ENCODE measurements at regions of chr15 and their contacts with region 1.

Region 1: GRCh38 chr15:74127260-74127953 is 3.0 kb upstream of the ISLR2 start:
- DNase-seq: peak; percentile 90 to 96 (median 96)
- ATAC-seq: peak; percentile 96
- H3K4me3 ChIP-seq: peak overlapping the region; percentile 39
- H3K27ac ChIP-seq: no peak overlapping the region
- H3K4me1 ChIP-seq: peaks cover 1% of the 10 kb centered on the region
- H3K27me3 ChIP-seq: no peaks in the 10 kb centered on the region

Region 2: GRCh38 chr15:73972984-73973682 is 154.3 kb before region 1 on chr15:
- intact Hi-C with region 1: loop called in 2 of 4 experiments (anchors 5 to 10 kb)
- DNase-seq: peak; percentile 86 to 95 (median 92)
- ATAC-seq: peak; percentile 90 to 93
- H3K4me3 ChIP-seq: no peak overlapping the region
- H3K27ac ChIP-seq: no peak overlapping the region
- H3K4me1 ChIP-seq: no peaks in the 10 kb centered on the region
- H3K27me3 ChIP-seq: no peaks in the 10 kb centered on the region

Region 3: DNA sequence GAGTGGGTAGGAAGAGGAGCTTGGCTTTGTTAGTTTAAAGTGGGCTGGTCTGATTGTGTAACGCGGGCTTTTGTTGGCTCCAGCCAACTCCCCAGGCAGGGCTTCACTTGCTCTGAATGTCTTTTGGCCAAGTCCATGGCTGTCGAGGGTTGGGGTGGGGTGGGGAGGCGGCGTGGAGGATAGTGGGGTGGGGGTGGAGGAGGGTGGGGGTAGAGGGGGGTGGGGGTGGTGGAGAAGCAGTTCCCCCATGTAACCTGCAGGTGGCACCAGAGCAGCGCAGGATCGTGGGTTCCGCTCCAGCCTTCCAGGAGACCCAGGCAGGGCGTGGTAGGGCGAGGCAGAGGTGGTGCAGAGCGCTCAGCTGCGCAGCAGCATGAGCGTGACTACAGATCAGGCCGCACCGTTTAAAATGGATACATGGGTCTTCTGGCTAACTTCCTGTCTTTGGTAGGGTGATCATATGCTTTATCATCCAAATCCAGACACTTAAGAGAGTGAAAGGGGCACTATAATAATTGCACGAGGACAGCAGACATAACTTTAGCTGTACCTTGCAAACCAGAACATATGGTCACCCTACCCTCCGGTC is 73.4 kb before region 1 on chr15:
- intact Hi-C with region 1: loop called in 1 of 4 experiments (anchors 10 kb)
- DNase-seq: peak; percentile 80 to 91 (median 89)
- ATAC-seq: peak; percentile 82 to 85
- H3K4me3 ChIP-seq: no peak overlapping the region
- H3K27ac ChIP-seq: no peak overlapping the region
- H3K4me1 ChIP-seq: no peaks in the 10 kb centered on the region
- H3K27me3 ChIP-seq: no peaks in the 10 kb centered on the region

Region 4: GRCh38 chr15:74302821-74303359 is 175.5 kb after region 1 on chr15:
- intact Hi-C with region 1: loop called (anchors 2 to 5 kb)
- DNase-seq: peak in 2 of 3 donors; percentile 34 to 65
- ATAC-seq: peak; percentile 29 to 48
- H3K4me3 ChIP-seq: no peak overlapping the region
- H3K27ac ChIP-seq: no peak overlapping the region
- H3K4me1 ChIP-seq: no peaks in the 10 kb centered on the region
- H3K27me3 ChIP-seq: no peaks in the 10 kb centered on the region

Region 5: DNA sequence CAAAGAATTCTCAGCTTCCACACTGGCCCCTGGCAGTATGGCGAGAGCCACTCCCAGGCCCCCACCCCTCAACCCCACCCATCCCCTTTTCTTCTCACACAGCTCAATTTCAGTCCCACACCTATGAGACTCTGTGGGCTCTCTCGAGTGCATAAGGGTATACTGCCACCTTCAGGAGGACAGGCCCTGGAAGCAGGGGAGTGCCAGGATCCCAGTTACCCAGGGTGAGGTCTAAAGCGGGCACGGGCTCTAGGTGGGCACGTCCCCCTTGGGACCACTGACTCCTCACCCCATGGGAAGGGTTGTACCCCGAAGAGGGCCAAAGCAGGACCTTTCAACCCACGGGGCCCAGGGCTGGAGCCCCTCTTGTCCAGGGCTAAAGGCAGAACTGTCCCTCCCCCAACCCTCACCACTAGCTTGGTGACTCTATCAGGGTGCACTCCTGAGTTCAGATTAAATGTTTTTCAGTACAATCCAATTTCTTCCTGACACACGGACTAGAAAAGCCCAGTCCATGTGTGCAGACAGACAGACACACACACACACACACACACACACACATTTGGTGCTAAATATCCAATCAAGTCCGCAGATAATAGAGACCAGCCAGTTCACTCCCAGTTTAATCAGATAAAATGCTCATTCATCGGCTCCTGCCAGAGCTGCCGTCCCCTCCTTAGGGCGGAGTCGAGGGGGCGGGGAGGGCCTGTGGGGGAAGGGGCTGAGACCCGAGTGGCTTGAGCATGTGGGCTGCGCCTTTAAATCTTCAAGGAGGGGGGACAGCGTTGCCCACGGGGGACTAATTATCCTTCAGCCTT is 180.6 kb after region 1 on chr15:
- intact Hi-C with region 1: loop called (anchors 2 to 5 kb)
- DNase-seq: peak; percentile 51 to 79 (median 75)
- ATAC-seq: peak; percentile 84 to 89
- H3K4me3 ChIP-seq: no peak overlapping the region
- H3K27ac ChIP-seq: no peak overlapping the region
- H3K4me1 ChIP-seq: no peaks in the 10 kb centered on the region
- H3K27me3 ChIP-seq: no peaks in the 10 kb centered on the region

Region 6: GRCh38 chr15:74322181-74323076 is 195.0 kb after region 1 on chr15:
- intact Hi-C with region 1: loop called in 3 of 4 experiments (anchors 5 kb)
- DNase-seq: peak; percentile 66 to 87 (median 86)
- ATAC-seq: peak; percentile 53 to 66
- H3K4me3 ChIP-seq: no peak overlapping the region
- H3K27ac ChIP-seq: no peak overlapping the region
- H3K4me1 ChIP-seq: peaks cover 4% of the 10 kb centered on the region
- H3K27me3 ChIP-seq: no peaks in the 10 kb centered on the region